HepG2 (cell line): ENCODE measurements at regions of chr4 and their contacts with region 1.

Region 1: GRCh38 chr4:143513306-143514168 is at the start of gene SMARCA5:
- DNase-seq: peak; percentile 96
- ATAC-seq: peak; percentile 91
- H3K4me3 ChIP-seq: peak within 1 kb of the TSS; percentile 83 to 93 (median 87)
- H3K27ac ChIP-seq: peak within 1 kb of the TSS; percentile 87
- H3K4me1 ChIP-seq: peaks cover 44% of the 10 kb centered on the region
- H3K27me3 ChIP-seq: no peaks in the 10 kb centered on the region; a peak in 1 of 5 replicates
- CTCF ChIP-seq: peak; percentile 33
- EP300 ChIP-seq: no peak
- POLR2A ChIP-seq: peak; percentile 85 to 90
- RAD21 ChIP-seq: 0 out of 2 replicates have a peak, but pooled peaks have one; percentile 34
- total RNA-seq, gene SMARCA5: 37.5 and 58.4 TPM in 2 replicates

Region 2: GRCh38 chr4:143184217-143185116 is 329.1 kb before region 1 on chr4 and contains the start of gene USP38:
- CTCF ChIA-PET with region 1: no interaction called
- POLR2A ChIA-PET with region 1: interaction called, 5 read pairs
- in situ Hi-C with region 1: loop called (anchors 10 kb)
- intact Hi-C with region 1: loop called (anchors 10 kb)
- DNase-seq: peak; percentile 91
- ATAC-seq: peak; percentile 94
- H3K4me3 ChIP-seq: peak within 1 kb of the TSS; percentile 83 to 100 (median 96)
- H3K27ac ChIP-seq: peak within 1 kb of the TSS; percentile 88
- H3K4me1 ChIP-seq: peaks cover 31% of the 10 kb centered on the region
- H3K27me3 ChIP-seq: no peaks in the 10 kb centered on the region; a peak in 1 of 5 replicates
- CTCF ChIP-seq: no peak; the same call in 1 of the 2 replicates
- EP300 ChIP-seq: no peak; a peak in 1 of 4 replicates
- POLR2A ChIP-seq: peak; percentile 82 to 93
- RAD21 ChIP-seq: no peak
- total RNA-seq, gene USP38: 11.8 and 15.5 TPM in 2 replicates

Region 3: DNA sequence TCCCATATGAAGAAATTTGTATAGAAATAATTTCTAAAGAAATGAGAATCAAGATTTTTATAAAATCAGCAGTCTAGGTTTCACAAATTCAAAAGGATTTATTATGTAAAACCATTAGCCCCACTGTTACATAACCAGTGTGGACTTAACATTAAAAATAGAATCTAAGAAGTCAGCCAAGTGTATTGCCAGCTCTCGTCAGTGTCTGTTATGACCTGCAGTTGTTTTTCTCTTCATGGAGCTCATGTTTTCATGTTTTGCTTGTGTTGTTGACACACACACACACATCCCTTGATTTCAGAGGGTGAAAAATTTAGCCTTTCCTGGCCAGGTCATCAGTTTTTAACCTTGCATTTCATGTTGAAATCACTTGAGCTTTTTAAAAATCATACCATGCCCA is 289.3 kb before region 1 on chr4:
- CTCF ChIA-PET with region 1: no interaction called
- POLR2A ChIA-PET with region 1: interaction called, 6 read pairs
- in situ Hi-C with region 1: no loop called
- intact Hi-C with region 1: loop called (anchors 10 kb)
- DNase-seq: no peak
- ATAC-seq: no peak
- H3K4me3 ChIP-seq: peak overlapping the region in 2 of 3 experiments; percentile 19 to 23; a peak in 1 of 6 replicates
- H3K27ac ChIP-seq: peak overlapping the region; percentile 68
- H3K4me1 ChIP-seq: peaks cover 31% of the 10 kb centered on the region
- H3K27me3 ChIP-seq: no peaks in the 10 kb centered on the region
- CTCF ChIP-seq: no peak
- EP300 ChIP-seq: no peak
- POLR2A ChIP-seq: no peak
- RAD21 ChIP-seq: no peak

Region 4: GRCh38 chr4:143606480-143606879 is 92.9 kb after region 1 on chr4:
- CTCF ChIA-PET with region 1: no interaction called
- POLR2A ChIA-PET with region 1: no interaction called
- in situ Hi-C with region 1: no loop called
- intact Hi-C with region 1: no loop called
- DNase-seq: no peak
- ATAC-seq: no peak
- H3K4me3 ChIP-seq: no peak overlapping the region
- H3K27ac ChIP-seq: no peak overlapping the region
- H3K4me1 ChIP-seq: no peaks in the 10 kb centered on the region
- H3K27me3 ChIP-seq: no peaks in the 10 kb centered on the region
- CTCF ChIP-seq: no peak
- EP300 ChIP-seq: no peak
- POLR2A ChIP-seq: no peak
- RAD21 ChIP-seq: no peak

Region 5: DNA sequence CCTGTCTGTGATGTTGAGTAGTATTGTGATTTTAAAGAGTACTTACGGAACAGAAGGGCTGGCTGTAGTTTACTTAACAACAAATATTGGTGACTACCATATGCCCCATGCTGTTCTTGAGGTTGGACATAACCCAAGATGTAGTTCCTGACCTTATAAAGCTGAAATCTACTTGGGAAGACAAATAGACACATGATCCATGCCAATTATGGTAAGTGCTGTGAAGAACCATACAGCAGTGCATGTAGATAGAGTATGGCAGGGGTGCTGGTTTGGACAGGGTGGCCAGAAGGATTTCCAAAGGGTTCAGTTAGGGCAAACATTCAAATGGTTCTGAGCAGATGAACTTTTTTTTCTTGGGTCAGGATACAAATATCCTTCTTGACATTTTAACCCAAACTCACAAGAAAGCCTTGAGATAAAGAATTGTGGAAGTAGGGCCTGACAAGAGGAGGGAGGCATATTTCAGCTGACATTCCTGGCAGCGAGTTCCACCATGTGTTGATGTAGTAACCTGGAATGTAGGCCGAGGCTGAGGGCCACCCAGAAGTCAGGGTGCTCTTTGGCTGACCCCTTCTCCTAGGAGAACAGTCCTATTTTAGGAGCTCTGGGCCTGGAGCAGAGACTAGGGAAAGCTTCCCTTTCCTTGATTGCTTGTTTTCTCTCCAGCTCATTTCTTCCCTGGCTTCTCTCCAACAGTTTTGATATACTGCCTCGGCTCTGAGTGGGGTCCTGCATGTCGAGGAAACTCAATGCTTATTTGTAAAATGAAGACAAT is 112.8 kb after region 1 on chr4:
- CTCF ChIA-PET with region 1: no interaction called
- POLR2A ChIA-PET with region 1: no interaction called
- in situ Hi-C with region 1: no loop called
- intact Hi-C with region 1: no loop called
- DNase-seq: no peak
- ATAC-seq: no peak
- H3K4me3 ChIP-seq: no peak overlapping the region
- H3K27ac ChIP-seq: no peak overlapping the region
- H3K4me1 ChIP-seq: no peaks in the 10 kb centered on the region
- H3K27me3 ChIP-seq: no peaks in the 10 kb centered on the region
- CTCF ChIP-seq: no peak
- EP300 ChIP-seq: no peak
- POLR2A ChIP-seq: no peak
- RAD21 ChIP-seq: no peak

Region 6: GRCh38 chr4:145097821-145098674 is 1584.5 kb after region 1 on chr4 and contains the starts of genes ABCE1 and ANAPC10:
- CTCF ChIA-PET with region 1: no interaction called
- POLR2A ChIA-PET with region 1: no interaction called
- in situ Hi-C with region 1: loop called (anchors 25 kb)
- intact Hi-C with region 1: no loop called
- DNase-seq: peak; percentile 94
- ATAC-seq: peak; percentile 94
- H3K4me3 ChIP-seq: peak within 1 kb of the TSS; percentile 71 to 91 (median 85)
- H3K27ac ChIP-seq: peak within 1 kb of the TSS; percentile 96
- H3K4me1 ChIP-seq: peaks cover 41% of the 10 kb centered on the region
- H3K27me3 ChIP-seq: no peaks in the 10 kb centered on the region; a peak in 1 of 5 replicates
- CTCF ChIP-seq: peak; percentile 47; the same call in 1 of the 2 replicates
- EP300 ChIP-seq: no peak
- POLR2A ChIP-seq: peak; percentile 90 to 97
- RAD21 ChIP-seq: 0 out of 2 replicates have a peak, but pooled peaks have one; percentile 9
- total RNA-seq, gene ABCE1: 139 and 226 TPM in 2 replicates
- total RNA-seq, gene ANAPC10: 32.7 and 37.8 TPM in 2 replicates